ENCODE measurements at regions of chr15 and their contacts with region 1.

Region 1: DNA sequence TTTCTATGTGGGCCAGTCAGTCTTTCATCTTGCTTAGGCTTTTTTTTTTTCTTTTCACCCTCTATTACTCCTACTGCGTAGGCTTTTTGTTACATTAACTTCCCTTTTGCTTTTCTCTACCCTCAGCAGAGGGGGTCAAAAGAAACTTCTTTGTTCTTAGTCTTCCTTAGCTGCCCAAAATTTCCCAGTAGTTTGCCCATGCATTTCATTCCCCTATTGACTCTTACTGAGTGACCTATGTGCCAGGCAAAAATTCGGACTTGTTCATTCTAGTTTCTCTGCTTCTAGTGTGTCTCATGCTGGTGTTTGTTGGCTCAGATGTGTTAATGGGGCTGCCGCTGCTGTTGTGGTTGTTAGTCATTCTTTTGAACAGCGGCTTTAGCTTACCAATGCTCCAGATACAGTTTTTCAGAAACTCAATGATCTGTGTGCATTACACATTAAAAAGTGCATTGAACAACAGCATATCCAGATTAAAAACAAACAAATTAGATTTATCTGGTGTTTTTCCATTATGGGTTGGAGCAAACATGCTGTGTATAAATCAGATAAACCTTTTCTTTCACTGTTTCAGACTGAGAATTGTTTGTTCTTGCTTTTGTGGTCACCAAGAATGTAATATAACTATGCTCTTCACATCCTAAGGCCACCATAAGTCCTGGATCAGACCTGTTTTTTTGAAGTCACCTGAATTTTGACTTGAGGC is 43.0 kb downstream of the PDE8A start:
- DNase-seq: no peak
- H3K4me3 ChIP-seq: no peak overlapping the region
- H3K27ac ChIP-seq: no peak overlapping the region
- H3K4me1 ChIP-seq: peaks cover 2 to 14% of the 10 kb centered on the region in 2 donors
- H3K27me3 ChIP-seq: no peaks in the 10 kb centered on the region
- CTCF ChIP-seq: no peak
- POLR2A ChIP-seq: no peak

Region 2: GRCh38 chr15:84979651-84980050 is 45.0 kb before region 1 on chr15:
- intact Hi-C with region 1: loop called (anchors 10 kb)
- DNase-seq: no peak
- H3K4me3 ChIP-seq: peak overlapping the region in 1 of 2 donors; percentile 82
- H3K27ac ChIP-seq: peak overlapping the region; percentile 89 to 95
- H3K4me1 ChIP-seq: no peaks in the 10 kb centered on the region
- H3K27me3 ChIP-seq: no peaks in the 10 kb centered on the region
- CTCF ChIP-seq: no peak
- POLR2A ChIP-seq: no peak

Region 3: GRCh38 chr15:85094685-85095084 is 70.0 kb after region 1 on chr15:
- intact Hi-C with region 1: no loop called
- DNase-seq: no peak
- H3K4me3 ChIP-seq: no peak overlapping the region
- H3K27ac ChIP-seq: no peak overlapping the region
- H3K4me1 ChIP-seq: no peaks in the 10 kb centered on the region
- H3K27me3 ChIP-seq: no peaks in the 10 kb centered on the region
- CTCF ChIP-seq: no peak
- POLR2A ChIP-seq: no peak

Measured in uterus (tissue), 4 donors.